Dorsolateral prefrontal cortex (tissue), 120 donors: ENCODE measurements at regions of chr6 and their contacts with region 1.

Region 1: DNA sequence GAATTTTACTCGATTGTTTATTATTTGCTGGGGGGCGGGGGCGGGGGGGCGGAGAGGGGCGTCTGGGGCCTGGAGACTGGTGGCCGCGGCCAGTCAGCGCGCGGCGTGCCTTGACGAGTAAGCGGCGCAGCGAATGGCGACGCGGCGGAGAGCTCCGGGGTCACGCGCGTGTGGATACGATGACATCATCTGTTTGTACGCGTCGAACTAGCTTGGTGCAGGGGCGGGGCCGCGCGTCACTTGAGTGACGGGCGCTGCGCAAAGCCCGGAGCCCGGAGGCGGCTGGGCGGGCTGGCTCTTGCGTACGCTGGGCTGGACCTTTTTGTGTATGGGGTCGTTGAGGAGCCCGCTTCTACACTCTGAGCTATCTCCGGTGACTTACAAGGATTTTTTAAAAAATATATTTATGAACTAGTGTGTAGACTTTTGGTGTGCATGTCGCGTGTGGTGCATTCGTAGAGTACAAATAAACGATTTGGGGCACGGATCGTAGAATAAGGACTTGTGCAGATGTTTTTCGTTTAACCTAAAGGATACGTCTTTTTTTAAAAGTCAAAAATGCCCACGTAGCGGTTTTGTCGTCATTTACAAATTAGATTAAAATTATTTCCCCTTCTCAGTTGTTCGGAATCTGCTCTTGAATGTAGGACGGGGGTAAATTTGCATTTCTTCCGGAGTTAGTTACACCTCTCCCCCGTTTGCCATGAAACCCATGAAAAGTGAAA is 2.2 kb upstream of the FOXO3 start:
- DNase-seq: peak; percentile 98 to 99 (median 99)
- H3K4me3 ChIP-seq: peak overlapping the region; percentile 69 to 99 (median 94)
- H3K27ac ChIP-seq: peak overlapping the region; percentile 92 to 100 (median 99)
- H3K27me3 ChIP-seq: no peaks in the 10 kb centered on the region
- CTCF ChIP-seq: peak in 4 of 56 donors; percentile 0 to 11 (median 2)

Region 2: GRCh38 chr6:108302386-108302785 is 256.1 kb before region 1 on chr6:
- intact Hi-C with region 1: no loop called
- DNase-seq: no peak
- H3K4me3 ChIP-seq: no peak overlapping the region
- H3K27ac ChIP-seq: no peak overlapping the region
- H3K27me3 ChIP-seq: no peaks in the 10 kb centered on the region
- CTCF ChIP-seq: no peak

Region 3: DNA sequence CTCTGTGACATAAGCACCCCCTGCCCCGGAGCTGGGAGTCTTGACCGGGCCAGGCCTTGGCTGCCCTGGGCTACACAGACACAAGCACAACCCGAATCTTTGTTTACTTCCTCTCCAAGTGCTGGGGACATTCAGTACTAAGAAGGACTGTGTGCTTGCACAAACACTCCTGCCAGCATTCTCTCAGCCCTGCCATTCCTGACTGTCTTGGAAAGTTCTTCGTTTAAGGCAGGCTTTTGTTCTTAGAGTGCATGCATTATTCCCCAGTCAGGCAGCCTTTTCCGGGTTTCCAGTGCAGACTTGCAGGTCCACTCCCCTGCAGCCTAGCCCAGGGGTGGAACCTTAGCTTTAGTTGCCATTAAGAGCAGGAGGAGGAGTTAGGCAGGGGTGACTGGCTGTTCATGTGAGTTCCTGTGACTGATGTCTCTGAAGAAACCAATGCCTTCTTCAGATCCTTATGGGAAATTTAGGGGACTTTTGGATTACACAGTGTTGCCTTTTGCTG is 30.8 kb after region 1 on chr6:
- intact Hi-C with region 1: loop called in 1 of 2 experiments (anchors 2 kb)
- DNase-seq: peak in 7 of 10 donors; percentile 29 to 64 (median 53)
- H3K4me3 ChIP-seq: peak overlapping the region in 25 of 59 donors; percentile 0 to 54 (median 14)
- H3K27ac ChIP-seq: peak overlapping the region; percentile 51 to 97 (median 91)
- H3K27me3 ChIP-seq: no peaks in the 10 kb centered on the region
- CTCF ChIP-seq: peak in 1 of 56 donors; percentile 16

Region 4: DNA sequence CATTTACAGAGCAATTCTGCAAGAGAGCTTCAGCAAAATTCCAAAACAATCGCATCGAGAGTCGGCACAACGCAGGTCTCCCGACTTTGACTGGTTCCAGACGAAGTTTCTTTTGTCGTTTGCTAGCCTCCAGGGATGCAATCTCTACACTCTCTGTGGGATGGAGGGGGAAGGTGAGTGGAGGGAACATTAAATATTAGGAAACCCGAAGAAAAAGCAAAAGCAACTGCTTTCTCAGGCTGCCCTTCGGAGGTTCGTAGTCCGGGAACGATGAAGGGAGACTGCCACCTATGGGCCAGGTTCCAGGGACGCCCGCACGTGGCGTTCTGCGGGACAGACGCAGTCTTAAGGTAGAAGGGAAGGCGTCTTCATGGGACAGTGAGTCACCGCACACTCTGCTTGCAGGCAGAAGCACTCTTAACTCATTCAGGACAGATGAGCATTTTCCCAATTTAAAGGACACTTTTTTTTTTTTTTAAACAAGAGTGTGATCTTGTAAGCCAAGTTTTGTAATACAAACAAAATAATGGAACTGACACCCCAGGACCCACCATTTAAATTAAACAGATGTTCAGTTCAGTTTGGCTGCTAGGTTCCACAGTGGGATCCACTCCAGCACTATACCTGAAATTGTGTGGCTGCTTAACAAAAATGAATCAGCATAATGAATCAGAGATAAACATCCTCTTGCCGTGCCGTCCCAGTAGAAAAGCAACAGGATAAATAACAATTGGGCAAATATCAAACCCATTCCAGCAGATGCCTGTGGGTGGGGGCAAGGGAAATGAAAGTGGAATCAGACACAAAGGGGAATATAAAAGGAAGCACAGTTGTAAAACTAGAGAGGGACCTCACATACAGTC is 223.9 kb after region 1 on chr6:
- intact Hi-C with region 1: loop called (anchors 1 to 2 kb)
- DNase-seq: peak; percentile 73 to 84 (median 80)
- H3K4me3 ChIP-seq: peak overlapping the region; percentile 28 to 79 (median 60)
- H3K27ac ChIP-seq: peak overlapping the region in 28 of 59 donors; percentile 4 to 79 (median 52)
- H3K27me3 ChIP-seq: no peaks in the 10 kb centered on the region
- CTCF ChIP-seq: peak; percentile 41 to 93 (median 80)

Region 5: GRCh38 chr6:108835218-108835850 is 276.8 kb after region 1 on chr6:
- intact Hi-C with region 1: loop called in 1 of 2 experiments (anchors 5 kb)
- DNase-seq: peak; percentile 86 to 93 (median 90)
- H3K4me3 ChIP-seq: peak overlapping the region in 7 of 59 donors; percentile 2 to 31 (median 9)
- H3K27ac ChIP-seq: peak overlapping the region in 28 of 59 donors; percentile 3 to 70 (median 41)
- H3K27me3 ChIP-seq: no peaks in the 10 kb centered on the region
- CTCF ChIP-seq: peak; percentile 89 to 99 (median 96)

Region 6: GRCh38 chr6:108848116-108848868 is 289.8 kb after region 1 on chr6 and contains the start of gene ARMC2:
- intact Hi-C with region 1: loop called in 1 of 2 experiments (anchors 1 kb)
- DNase-seq: peak; percentile 82 to 97 (median 88)
- H3K4me3 ChIP-seq: peak within 1 kb of the TSS; percentile 66 to 100 (median 87)
- H3K27ac ChIP-seq: peak within 1 kb of the TSS; percentile 13 to 93 (median 82)
- H3K27me3 ChIP-seq: no peaks in the 10 kb centered on the region
- CTCF ChIP-seq: peak in 19 of 56 donors; percentile 4 to 55 (median 29)
- total RNA-seq, gene ARMC2: 21.4 to 65.7 (median 42.0) TPM

Region 7: DNA sequence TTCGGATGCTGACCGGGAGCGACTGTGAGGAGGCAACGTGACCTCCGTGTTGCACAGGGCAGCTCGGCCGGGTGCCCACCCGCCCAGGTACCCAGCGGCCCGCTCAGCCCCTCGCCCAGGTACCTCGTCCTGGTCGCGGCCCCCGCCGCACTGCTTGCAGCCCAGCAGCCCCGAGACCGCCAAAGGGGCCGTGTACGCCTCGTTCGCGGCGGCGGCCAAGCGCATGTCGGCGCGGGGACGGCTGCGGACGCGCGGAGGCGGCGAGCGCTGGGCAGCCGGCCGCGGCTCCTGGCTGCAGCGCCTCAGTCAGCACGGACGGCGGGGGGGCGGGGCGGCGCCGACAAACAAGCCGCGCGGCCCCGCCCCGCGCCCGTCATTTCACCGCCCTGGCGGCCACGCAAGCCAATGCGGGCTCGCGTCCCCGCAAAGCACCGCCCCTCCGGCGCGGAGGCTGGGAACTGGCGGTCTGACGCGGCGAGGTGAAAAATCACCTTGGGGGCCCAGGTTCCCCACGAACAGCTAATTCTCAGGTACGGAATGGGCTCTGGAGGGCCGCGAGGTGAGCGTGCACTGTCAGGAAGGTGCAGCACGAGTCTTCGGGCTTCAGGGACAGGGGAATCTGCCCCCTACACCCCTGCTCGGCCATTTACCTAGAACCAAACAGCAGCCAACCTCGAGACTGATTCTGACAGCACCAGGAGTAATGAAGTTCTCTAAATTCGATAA is 450.9 kb after region 1 on chr6:
- intact Hi-C with region 1: loop called (anchors 2 to 10 kb)
- DNase-seq: peak; percentile 88 to 97 (median 94)
- H3K4me3 ChIP-seq: peak overlapping the region; percentile 67 to 99 (median 93)
- H3K27ac ChIP-seq: peak overlapping the region; percentile 90 to 99 (median 97)
- H3K27me3 ChIP-seq: no peaks in the 10 kb centered on the region
- CTCF ChIP-seq: peak in 37 of 56 donors; percentile 14 to 60 (median 35)

Region 8: DNA sequence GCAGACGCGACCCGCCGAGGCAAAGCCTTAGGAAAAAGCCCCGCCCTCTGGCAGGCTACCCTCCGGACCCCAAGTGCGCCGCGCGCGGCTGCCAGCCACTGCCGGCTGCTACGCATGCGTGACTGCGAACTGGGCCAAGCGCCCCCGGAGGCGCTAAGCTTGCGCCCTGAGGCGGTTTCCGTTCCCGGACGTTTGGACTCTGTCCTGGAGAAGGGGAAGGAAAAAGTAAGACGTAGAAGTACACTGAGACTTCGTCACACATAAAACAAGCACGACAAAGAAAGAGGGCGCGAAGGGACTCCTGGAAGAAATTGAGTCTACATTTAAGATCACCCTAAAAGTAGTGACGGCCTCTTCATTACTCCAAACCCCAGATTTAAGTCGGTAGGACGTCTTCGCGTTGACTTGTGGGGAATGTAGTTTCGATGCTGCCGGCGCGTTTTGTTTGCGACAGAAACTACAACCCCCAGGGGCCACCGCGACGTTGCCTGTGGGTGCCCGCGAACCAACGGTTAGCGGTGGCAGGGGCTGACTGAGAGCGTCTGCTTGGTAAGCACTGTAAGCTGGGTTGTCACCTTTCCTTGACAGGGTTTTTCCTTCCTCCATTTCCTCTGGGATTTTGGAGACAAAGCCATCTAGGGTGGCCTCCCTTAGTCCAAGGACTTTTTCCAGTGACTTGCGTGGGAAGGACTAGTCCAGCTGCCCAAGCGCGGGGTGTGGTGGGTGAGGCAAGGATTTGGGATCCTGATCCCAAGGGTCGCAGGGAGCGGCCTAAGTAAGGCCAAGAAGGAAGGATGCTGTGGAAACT is 536.7 kb after region 1 on chr6 and contains the start of gene CEP57L1:
- intact Hi-C with region 1: loop called in 1 of 2 experiments (anchors 2 kb)
- DNase-seq: peak; percentile 92 to 98 (median 96)
- H3K4me3 ChIP-seq: peak within 1 kb of the TSS; percentile 58 to 99 (median 86)
- H3K27ac ChIP-seq: peak within 1 kb of the TSS; percentile 89 to 100 (median 98)
- H3K27me3 ChIP-seq: no peaks in the 10 kb centered on the region
- CTCF ChIP-seq: peak in 20 of 56 donors; percentile 4 to 46 (median 18)
- total RNA-seq, gene CEP57L1: 14.7 to 38.7 (median 24.8) TPM